ENCODE measurements at regions of chr22 and their contacts with region 1.

Region 1: GRCh38 chr22:30485362-30485988 is 13.7 kb upstream of the SEC14L3 start:
- DNase-seq: peak; percentile 69 to 87
- ATAC-seq: peak; percentile 86 to 99 (median 99)
- H3K4me3 ChIP-seq: no peak overlapping the region
- H3K4me3 Mint-ChIP-seq: no peak overlapping the region
- H3K27ac ChIP-seq: no peak overlapping the region
- H3K27ac Mint-ChIP-seq: no peak overlapping the region
- H3K4me1 ChIP-seq: peaks cover 5% of the 10 kb centered on the region
- H3K4me1 Mint-ChIP-seq: peaks cover 0 to 5% of the 10 kb centered on the region in 2 donors
- H3K27me3 ChIP-seq: no peaks in the 10 kb centered on the region
- H3K27me3 Mint-ChIP-seq: peaks cover 3 to 5% of the 10 kb centered on the region in 2 donors
- CTCF ChIP-seq: peak; percentile 96

Region 2: GRCh38 chr22:30386960-30387827 is 98.3 kb before region 1 on chr22 and contains the start of gene RNF215:
- intact Hi-C with region 1: loop called (anchors 1 kb)
- DNase-seq: peak; percentile 87 to 90
- ATAC-seq: peak; percentile 94 to 97 (median 95)
- H3K4me3 ChIP-seq: peak within 1 kb of the TSS; percentile 9
- H3K4me3 Mint-ChIP-seq: peak within 1 kb of the TSS; percentile 52
- H3K27ac ChIP-seq: no peak within 1 kb of the TSS
- H3K27ac Mint-ChIP-seq: peak within 1 kb of the TSS in 1 of 2 donors; percentile 76
- H3K4me1 ChIP-seq: peaks cover 12% of the 10 kb centered on the region
- H3K4me1 Mint-ChIP-seq: peaks cover 5 to 6% of the 10 kb centered on the region in 2 donors
- H3K27me3 ChIP-seq: no peaks in the 10 kb centered on the region
- H3K27me3 Mint-ChIP-seq: peaks cover 0 to 5% of the 10 kb centered on the region in 2 donors
- CTCF ChIP-seq: peak; percentile 89
- total RNA-seq, gene RNF215: 7.5 to 9.8 (median 9.5) TPM

Region 3: DNA sequence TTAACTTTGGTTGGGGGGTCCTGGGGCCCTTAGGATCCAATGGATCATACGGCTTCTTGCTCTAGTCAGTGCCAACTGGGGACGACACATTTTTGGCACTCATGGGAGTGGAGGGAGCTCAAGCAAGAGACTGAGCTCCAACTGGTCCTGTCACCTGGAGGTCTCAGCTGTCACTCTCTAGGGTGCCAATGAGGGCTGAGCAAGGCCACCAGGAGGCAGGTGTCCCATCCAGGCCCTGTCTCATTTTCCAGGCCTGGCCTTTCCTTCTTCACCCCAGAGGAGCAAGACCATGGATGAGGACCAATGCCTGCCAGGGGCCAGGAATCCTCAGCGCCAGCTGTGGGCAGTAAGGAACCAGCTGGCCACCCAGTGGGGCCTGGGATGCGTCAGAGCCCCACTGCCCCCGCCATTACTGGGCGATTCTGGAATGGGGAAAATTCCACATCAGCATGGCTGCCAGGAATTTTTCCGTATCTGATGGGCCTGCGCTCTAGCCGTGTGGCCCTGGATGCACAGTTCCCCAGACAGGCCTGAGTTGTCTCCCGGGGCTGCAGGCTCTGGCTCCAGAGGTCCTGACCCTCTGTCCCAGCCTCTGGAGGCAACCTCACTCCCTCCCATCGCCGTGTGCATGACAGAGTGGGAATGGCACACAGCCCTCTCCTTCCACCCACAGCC is 89.7 kb after region 1 on chr22:
- intact Hi-C with region 1: no loop called
- DNase-seq: no peak
- ATAC-seq: no peak
- H3K4me3 ChIP-seq: no peak overlapping the region
- H3K4me3 Mint-ChIP-seq: no peak overlapping the region
- H3K27ac ChIP-seq: no peak overlapping the region
- H3K27ac Mint-ChIP-seq: no peak overlapping the region
- H3K4me1 ChIP-seq: no peaks in the 10 kb centered on the region
- H3K4me1 Mint-ChIP-seq: no peaks in the 10 kb centered on the region
- H3K27me3 ChIP-seq: peaks cover 4% of the 10 kb centered on the region
- H3K27me3 Mint-ChIP-seq: no peaks in the 10 kb centered on the region
- CTCF ChIP-seq: no peak

Measured in natural killer cell (primary cell).